ENCODE measurements at regions of chr1 and their contacts with region 1.

Region 1: DNA sequence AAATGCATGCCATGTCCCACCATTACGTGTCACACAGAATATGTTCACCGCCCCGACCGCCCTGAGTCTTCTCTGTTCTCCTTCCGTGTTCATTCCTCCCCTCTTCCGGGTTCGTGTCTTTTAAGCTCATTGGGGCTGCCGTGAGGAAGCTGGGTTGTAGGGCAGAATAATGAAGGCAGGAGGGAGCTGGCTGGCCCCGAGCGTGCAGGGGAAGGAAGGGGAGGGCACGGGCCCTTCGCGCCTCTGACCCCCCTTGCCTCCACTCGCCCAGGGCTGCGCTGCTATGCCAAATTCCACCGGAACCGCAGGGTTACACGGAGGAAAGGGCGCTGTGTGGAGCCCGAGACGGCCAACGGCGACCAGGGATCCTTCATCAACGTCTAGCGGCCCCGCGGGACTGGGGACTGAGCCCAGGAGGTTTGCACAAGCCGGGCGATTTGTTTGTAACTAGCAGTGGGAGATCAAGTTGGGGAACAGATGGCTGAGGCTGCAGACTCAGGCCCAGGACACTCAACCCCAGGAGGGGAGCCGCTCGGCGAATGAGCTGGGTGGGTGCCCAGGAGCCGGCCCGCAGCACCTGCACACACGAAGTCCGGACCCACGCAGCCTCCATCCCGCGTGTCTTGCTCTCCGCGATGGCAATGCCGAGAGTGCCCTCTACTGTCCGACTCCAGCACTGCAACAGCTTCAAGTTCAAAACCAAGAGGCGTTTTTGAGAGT is 16.5 kb upstream of the AGTRAP start:
- DNase-seq: no peak
- ATAC-seq: peak; percentile 82
- H3K4me3 ChIP-seq: peak overlapping the region; percentile 33 to 54
- H3K27ac ChIP-seq: 0 out of 2 replicates have a peak overlapping the region, but pooled peaks have one; percentile 29
- H3K4me1 ChIP-seq: no peaks in the 10 kb centered on the region; the same call in 1 of the 2 replicates
- H3K27me3 ChIP-seq: no peaks in the 10 kb centered on the region
- CTCF ChIP-seq: peak; percentile 97

Region 2: GRCh38 chr1:11188381-11188780 is 531.1 kb before region 1 on chr1:
- CTCF ChIA-PET with region 1: no interaction called
- POLR2A ChIA-PET with region 1: interaction called, 10 read pairs
- in situ Hi-C with region 1: no loop called
- intact Hi-C with region 1: no loop called
- DNase-seq: no peak
- ATAC-seq: no peak
- H3K4me3 ChIP-seq: no peak overlapping the region
- H3K27ac ChIP-seq: peak overlapping the region; percentile 12; the same call in 1 of the 2 replicates
- H3K4me1 ChIP-seq: no peaks in the 10 kb centered on the region
- H3K27me3 ChIP-seq: no peaks in the 10 kb centered on the region
- CTCF ChIP-seq: no peak

Region 3: GRCh38 chr1:11622398-11622797 is 97.1 kb before region 1 on chr1:
- CTCF ChIA-PET with region 1: no interaction called
- POLR2A ChIA-PET with region 1: no interaction called
- in situ Hi-C with region 1: no loop called
- intact Hi-C with region 1: no loop called
- DNase-seq: no peak
- ATAC-seq: peak; percentile 48; the same call in 1 of the 2 replicates
- H3K4me3 ChIP-seq: no peak overlapping the region
- H3K27ac ChIP-seq: no peak overlapping the region
- H3K4me1 ChIP-seq: no peaks in the 10 kb centered on the region
- H3K27me3 ChIP-seq: no peaks in the 10 kb centered on the region
- CTCF ChIP-seq: no peak

Region 4: GRCh38 chr1:11653101-11653860 is 66.2 kb before region 1 on chr1:
- CTCF ChIA-PET with region 1: interaction called, 12 read pairs
- POLR2A ChIA-PET with region 1: interaction called, 7 read pairs
- in situ Hi-C with region 1: no loop called
- intact Hi-C with region 1: loop called (anchors 5 kb)
- DNase-seq: no peak
- ATAC-seq: peak; percentile 32
- H3K4me3 ChIP-seq: peak overlapping the region; percentile 68 to 81
- H3K27ac ChIP-seq: peak overlapping the region; percentile 79
- H3K4me1 ChIP-seq: peaks cover 29% of the 10 kb centered on the region
- H3K27me3 ChIP-seq: no peaks in the 10 kb centered on the region
- CTCF ChIP-seq: no peak

Region 5: GRCh38 chr1:11670747-11671146 is 48.7 kb before region 1 on chr1:
- CTCF ChIA-PET with region 1: interaction called, 10 read pairs
- POLR2A ChIA-PET with region 1: interaction called, 6 read pairs
- in situ Hi-C with region 1: no loop called
- intact Hi-C with region 1: loop called (anchors 5 kb)
- DNase-seq: no peak
- ATAC-seq: no peak
- H3K4me3 ChIP-seq: no peak overlapping the region
- H3K27ac ChIP-seq: no peak overlapping the region
- H3K4me1 ChIP-seq: peaks cover 15% of the 10 kb centered on the region
- H3K27me3 ChIP-seq: no peaks in the 10 kb centered on the region
- CTCF ChIP-seq: no peak

Region 6: DNA sequence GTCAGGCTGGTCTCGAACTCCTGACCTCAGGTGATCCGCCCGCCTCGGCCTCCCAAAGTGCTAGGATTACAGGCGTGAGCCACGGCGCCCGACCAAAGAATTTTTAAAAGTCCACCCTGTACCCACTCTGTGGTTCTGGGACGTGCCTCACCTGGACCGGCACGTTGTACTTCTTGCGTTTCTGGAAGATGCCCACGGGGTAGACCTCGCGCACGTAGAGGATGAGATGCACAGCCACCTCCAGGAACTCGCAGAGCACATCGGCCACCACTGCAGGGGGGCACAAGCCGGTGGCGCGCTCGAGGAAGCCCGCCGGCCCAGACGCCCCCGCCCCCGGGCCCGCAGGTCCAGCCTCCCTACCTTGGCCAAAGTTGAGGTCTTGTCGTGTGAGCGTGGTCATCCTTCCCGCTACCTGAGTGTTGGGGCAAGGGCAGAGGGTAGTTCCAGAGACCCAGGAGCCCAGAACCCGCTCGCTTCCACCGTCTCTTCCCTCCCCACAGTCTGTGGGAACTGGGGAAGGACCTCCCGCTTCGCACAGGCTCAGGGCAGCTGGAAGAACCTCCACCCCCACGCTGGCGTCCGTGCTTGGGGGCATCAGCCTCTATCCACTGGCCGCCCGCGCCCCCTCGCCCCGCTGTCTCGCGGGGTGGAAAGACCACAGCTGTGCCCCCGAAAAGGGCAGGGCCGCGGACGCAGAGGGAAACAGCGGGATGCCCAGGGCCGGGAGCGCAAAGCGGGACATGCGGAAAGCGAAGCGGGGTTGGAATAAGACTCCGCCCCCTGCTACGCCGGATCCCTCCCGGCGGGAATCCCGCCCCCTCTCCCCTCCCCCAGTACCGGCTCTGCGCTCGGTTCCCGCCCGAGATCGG is 39.0 kb before region 1 on chr1:
- CTCF ChIA-PET with region 1: no interaction called
- POLR2A ChIA-PET with region 1: no interaction called
- in situ Hi-C with region 1: no loop called
- intact Hi-C with region 1: loop called (anchors 5 kb)
- DNase-seq: no peak
- ATAC-seq: peak; percentile 82
- H3K4me3 ChIP-seq: peak overlapping the region; percentile 86 to 87
- H3K27ac ChIP-seq: peak overlapping the region; percentile 81
- H3K4me1 ChIP-seq: peaks cover 7% of the 10 kb centered on the region
- H3K27me3 ChIP-seq: no peaks in the 10 kb centered on the region
- CTCF ChIP-seq: no peak

Measured in Panc1 (cell line).